Naive thymus-derived CD4-positive, alpha-beta T cell (primary cell): ENCODE measurements at regions of chr3 and their contacts with region 1.

Region 1: DNA sequence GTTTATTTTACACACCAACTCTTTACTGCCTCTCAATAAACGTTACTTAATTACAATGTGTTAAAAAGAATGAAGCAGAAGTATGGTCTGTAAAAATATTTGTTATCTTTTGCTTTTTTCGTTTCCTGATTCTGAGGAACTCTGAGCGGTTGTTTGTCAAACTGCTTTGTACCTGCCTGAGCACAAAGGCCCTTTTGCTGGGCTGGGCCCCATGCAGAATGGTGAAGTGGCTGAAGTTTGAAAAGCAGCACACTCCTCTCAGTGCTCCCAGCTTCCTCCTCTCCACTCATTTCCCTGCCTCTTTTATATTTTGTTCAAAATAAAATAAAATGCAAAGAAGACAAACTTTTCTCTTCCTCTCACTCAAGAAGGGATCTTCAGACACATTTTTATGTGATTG is 229.5 kb downstream of the NFKBIZ start:
- DNase-seq: peak in 6 of 9 donors; percentile 36 to 64 (median 50)
- ATAC-seq: peak; percentile 72
- H3K4me3 ChIP-seq: peak overlapping the region; percentile 27
- H3K4me3 Mint-ChIP-seq: peak overlapping the region; percentile 47 to 82 (median 70)
- H3K27ac ChIP-seq: peak overlapping the region; percentile 74
- H3K27ac Mint-ChIP-seq: peak overlapping the region; percentile 85 to 99 (median 97)
- H3K4me1 ChIP-seq: peaks cover 0 to 44% of the 10 kb centered on the region in 2 donors
- H3K4me1 Mint-ChIP-seq: peaks cover 16 to 84% (median 72%) of the 10 kb centered on the region in 7 donors
- H3K27me3 ChIP-seq: no peaks in the 10 kb centered on the region
- H3K27me3 Mint-ChIP-seq: peaks cover 0 to 4% (median 0%) of the 10 kb centered on the region in 5 donors

Region 2: GRCh38 chr3:102106416-102107097 is 27.7 kb after region 1 on chr3:
- CTCF ChIA-PET with region 1: no interaction called
- POLR2A ChIA-PET with region 1: interaction called, 13 read pairs
- intact Hi-C with region 1: loop called (anchors 2 to 5 kb)
- DNase-seq: peak in 5 of 9 donors; percentile 13 to 67 (median 53)
- ATAC-seq: peak; percentile 50
- H3K4me3 ChIP-seq: no peak overlapping the region
- H3K4me3 Mint-ChIP-seq: peak overlapping the region in 9 of 10 donors; percentile 19 to 83 (median 61)
- H3K27ac ChIP-seq: no peak overlapping the region
- H3K27ac Mint-ChIP-seq: peak overlapping the region in 7 of 9 donors; percentile 0 to 88 (median 72)
- H3K4me1 ChIP-seq: peaks cover 0 to 10% of the 10 kb centered on the region in 2 donors
- H3K4me1 Mint-ChIP-seq: peaks cover 4 to 41% (median 28%) of the 10 kb centered on the region in 7 donors
- H3K27me3 ChIP-seq: no peaks in the 10 kb centered on the region
- H3K27me3 Mint-ChIP-seq: no peaks in the 10 kb centered on the region